Lower leg skin (tissue), 4 donors: ENCODE measurements at regions of chr18 and their contacts with region 1.

Region 1: GRCh38 chr18:26865557-26865956 is at the start of gene AQP4:
- DNase-seq: no peak
- H3K4me3 ChIP-seq: no peak within 1 kb of the TSS
- CTCF ChIP-seq: no peak
- POLR2A ChIP-seq: no peak
- total RNA-seq, gene AQP4: 0.36 to 3.3 (median 0.59) TPM in 3 of 4 donors, not detected in the other

Region 2: DNA sequence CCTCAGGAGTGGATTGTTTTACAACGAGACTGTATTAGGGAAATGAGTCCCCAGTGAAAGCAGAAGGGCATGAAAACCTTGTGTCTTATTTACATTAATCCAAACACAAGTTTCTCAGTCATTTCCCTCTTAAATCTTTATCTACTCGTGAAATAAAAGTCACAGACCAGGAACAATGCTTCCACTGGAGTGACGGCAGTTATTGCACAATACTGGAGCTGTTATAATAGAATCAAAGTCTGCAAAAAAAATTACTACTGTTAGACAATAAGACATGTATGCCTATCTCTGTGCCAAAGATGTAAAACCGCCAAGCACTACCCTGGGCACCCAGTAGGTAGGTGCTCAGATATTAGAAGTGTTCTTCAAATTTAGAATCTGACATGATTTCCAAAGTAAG is 1889.1 kb before region 1 on chr18:
- intact Hi-C with region 1: loop called (anchors 5 kb)
- DNase-seq: no peak
- H3K4me3 ChIP-seq: no peak overlapping the region
- CTCF ChIP-seq: no peak
- POLR2A ChIP-seq: no peak

Region 3: GRCh38 chr18:26662996-26663395 is 202.6 kb before region 1 on chr18:
- intact Hi-C with region 1: no loop called
- DNase-seq: no peak
- H3K4me3 ChIP-seq: no peak overlapping the region
- CTCF ChIP-seq: no peak
- POLR2A ChIP-seq: no peak